Right ventricle myocardium superior (tissue), 1 donor: ENCODE measurements at regions of chrX and their contacts with region 1.

Region 1: DNA sequence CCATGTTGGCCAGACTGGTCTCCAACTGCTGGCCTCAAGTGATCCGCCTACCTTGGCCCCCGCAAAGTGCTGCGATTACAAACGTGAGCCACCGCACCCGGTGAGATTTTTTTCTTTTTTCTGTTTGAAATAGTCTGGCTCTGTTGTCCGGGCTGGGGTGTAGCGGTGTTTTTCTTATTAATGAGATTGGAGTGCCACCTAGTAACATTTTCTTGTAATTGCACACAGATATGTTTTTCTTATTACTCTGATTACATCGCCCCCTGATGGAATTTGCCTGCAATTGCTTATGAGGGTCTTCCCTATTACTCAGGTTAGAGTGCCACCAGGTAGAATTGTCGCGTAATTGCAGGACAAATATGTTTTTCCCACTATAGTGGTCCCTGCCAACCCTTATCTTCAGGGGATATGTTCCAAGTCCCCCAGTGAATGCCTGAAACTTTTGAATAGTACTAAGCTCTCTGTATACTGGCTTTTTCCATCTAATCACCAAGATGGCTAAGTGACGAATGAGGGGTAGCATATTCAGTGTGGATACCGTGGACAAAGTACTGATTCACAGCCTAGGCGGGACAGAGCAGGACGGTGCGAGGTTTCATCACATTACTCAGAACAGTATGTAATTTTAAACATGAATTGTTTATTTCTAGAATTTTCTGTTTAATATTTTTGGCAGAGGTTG is 8.6 kb upstream of the PDHA1 start:
- DNase-seq: no peak
- ATAC-seq: no peak

Region 2: DNA sequence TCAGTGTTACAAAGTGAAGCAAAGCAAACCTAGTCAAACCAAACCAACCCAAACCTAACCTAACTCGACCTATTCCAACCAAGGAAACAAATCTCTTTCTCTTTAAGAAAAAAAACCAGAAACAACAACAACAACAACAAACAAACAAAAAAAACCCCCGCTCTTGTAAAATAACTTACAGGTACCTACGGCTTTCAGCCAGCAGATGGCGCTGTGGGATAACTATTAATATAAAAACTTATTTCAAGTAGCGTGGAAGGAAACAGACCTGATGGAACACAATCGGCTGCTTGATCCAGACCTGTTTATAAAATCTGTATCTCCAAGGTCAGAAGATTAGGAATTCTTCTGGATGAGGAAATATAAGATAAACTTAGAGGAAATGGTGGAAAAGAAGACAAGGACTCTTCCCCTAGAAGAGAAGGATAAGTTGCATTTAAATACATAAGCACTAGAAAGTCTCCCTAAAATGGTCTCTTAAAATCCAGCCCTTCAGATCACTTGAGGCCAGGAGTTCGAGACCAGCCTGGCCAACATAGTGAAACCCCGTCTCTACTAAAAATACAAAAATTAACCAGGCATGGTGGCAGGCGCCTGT is 944.0 kb before region 1 on chrX:
- intact Hi-C with region 1: loop called (anchors 5 kb)
- DNase-seq: peak; percentile 69
- ATAC-seq: no peak

Region 3: DNA sequence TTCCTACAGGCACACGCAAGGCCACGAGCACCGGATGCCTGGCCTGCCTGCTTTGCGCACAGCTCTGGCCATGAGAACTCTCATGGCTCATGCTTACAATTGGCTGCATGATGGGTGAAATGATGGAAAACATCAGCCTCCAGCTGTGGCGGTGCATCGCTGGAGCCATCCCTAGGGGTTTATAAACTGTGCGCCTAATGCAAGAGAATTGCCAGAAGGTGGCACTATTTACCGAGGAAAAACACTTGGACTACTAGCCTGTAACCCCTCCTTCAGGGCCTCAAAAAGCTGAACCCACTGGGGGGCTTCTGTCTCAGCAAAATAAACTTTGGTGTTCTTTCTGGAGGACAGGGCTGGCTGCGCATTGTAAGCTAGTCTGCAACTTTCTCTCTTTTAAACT is 403.1 kb before region 1 on chrX:
- intact Hi-C with region 1: loop called (anchors 10 kb)
- DNase-seq: no peak
- ATAC-seq: no peak